ENCODE measurements at regions of chr1 and their contacts with region 1.

Region 1: GRCh38 chr1:111516005-111516535 is 12.6 kb upstream of the ADORA3 start:
- DNase-seq: peak; percentile 62
- CTCF ChIP-seq: peak; percentile 41

Region 2: GRCh38 chr1:111497592-111497991 is 18.5 kb before region 1 on chr1:
- CTCF ChIA-PET with region 1: interaction called, 84 read pairs
- POLR2A ChIA-PET with region 1: no interaction called
- DNase-seq: no peak
- CTCF ChIP-seq: no peak

Region 3: GRCh38 chr1:111789666-111790316 is 273.7 kb after region 1 on chr1:
- CTCF ChIA-PET with region 1: no interaction called
- POLR2A ChIA-PET with region 1: no interaction called
- DNase-seq: no peak
- CTCF ChIP-seq: no peak

Measured in GM10248 (cell line).